GM18951 (cell line): ENCODE measurements at regions of chr3 and their contacts with region 1.

Region 1: DNA sequence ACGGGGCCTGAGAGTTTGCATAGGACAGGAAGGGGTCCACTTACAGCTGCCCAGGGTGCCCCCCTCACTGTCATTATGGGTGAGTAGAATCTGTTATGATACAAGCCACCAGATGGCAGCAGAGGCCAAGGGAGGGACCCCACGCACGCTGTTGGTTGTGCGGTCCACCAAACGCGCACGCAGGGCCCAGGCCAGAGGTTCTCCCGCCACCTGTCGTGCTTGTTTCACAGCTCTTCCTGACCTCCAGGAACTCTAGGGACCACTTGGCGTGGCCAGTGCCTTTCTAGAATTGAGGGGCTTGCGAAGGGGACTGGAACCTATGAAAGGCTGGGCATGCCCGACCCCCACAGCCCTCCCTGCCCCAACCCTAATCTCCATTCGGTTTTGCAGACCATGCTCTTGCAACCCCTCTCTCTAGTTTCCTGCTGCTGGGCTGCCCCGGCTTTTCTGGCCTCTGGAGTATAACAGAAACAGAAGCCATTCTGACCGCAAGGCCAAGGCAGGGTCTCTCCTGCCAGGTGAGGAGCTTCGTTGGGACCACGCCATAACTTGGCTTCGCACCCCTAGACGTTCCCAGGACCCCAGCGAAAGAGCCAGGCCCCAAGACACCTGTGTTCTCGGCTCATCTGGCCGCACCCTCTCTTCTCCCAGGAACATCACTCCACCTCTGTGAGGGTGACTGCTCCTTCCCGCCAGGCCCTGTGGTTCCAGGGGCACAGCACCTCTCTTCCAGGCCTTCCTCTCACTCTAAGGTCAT is 46.0 kb downstream of the ALDH1L1 start:
- POLR2A ChIP-seq: no peak

Region 2: GRCh38 chr3:126259411-126260391 is 125.3 kb after region 1 on chr3:
- in situ Hi-C with region 1: no loop called
- POLR2A ChIP-seq: no peak

Region 3: DNA sequence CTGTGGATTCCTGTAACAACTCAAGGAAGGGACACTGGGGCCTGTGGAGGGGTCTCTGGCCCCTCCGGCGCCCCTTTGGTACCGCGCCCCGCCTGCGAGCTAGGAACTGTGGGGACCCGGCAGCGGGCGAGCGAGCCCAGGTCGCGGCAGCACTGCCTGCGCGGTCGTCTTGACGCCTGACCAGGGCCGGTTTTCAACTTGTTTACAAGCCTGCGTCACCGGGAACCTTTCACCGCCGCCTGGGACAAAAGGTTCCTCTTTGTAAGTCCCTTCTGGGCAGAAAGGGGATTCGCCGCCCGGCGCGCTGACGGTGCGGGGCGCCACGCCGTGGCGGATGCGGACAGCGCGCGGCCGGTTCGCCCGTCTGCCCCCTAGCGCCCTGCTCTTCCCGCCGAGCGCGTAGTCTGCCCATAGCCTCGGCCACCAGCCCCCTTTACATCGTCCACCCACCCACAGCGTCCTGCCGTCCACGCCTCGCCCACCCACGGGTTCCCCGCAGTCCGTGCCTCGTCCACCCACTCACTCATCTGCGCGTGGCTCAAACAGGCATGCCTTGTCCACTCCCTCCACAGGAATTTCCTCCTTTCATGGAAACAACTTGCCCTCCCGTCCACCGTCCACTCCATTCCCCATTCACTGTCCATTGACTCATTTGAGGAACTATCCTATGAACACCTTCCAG is 254.9 kb after region 1 on chr3:
- in situ Hi-C with region 1: loop called (anchors 25 kb)
- POLR2A ChIP-seq: no peak

Region 4: DNA sequence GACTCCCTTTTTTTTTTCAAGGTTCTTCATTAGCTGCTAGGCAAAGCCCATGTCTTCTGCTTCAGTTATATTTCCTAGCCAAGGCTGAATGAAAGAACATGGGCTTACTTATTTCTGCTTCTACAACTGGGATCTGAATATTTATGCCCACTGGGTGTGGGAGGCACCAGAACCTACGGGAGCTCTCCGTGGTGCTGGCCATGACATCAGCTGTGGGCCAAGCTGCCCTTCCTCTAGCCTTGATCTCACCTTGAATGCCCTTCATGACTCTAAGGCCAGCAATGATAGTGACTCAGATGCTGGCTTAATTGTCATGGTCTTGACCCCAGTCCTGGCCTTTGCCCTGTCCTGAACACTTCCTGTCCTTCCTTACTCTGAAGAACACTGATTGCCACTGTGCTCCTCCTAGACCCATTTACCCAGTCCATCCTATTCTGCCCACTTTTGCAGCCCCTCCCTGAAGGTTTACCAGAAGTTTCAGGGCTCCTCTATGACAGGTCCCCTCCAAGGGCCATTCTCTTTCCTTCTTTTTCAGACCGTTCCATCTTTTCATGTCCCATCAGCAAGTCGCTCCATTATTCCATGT is 1186.2 kb after region 1 on chr3:
- in situ Hi-C with region 1: no loop called
- POLR2A ChIP-seq: no peak